Activated CD4-positive, alpha-beta T cell treated with anti-CD3 and anti-CD28 coated beads, Interleukin-2, amount 10 ng/mL, durations not matched to agents 24 days and 14 days (primary cell): ENCODE measurements at regions of chr3 and their contacts with region 1.

Region 1: GRCh38 chr3:44477312-44478030 is at the start of gene ZNF445:
- DNase-seq: peak; percentile 94
- H3K4me3 Mint-ChIP-seq: peak within 1 kb of the TSS; percentile 94
- H3K27ac Mint-ChIP-seq: peak within 1 kb of the TSS; percentile 90
- H3K4me1 Mint-ChIP-seq: peaks cover 21% of the 10 kb centered on the region
- H3K27me3 Mint-ChIP-seq: no peaks in the 10 kb centered on the region
- total RNA-seq, gene ZNF445: 17.7 and 19.8 TPM in 2 replicates

Region 2: GRCh38 chr3:44323341-44323955 is 154.0 kb before region 1 on chr3:
- intact Hi-C with region 1: loop called (anchors 5 kb)
- DNase-seq: peak; percentile 85
- H3K4me3 Mint-ChIP-seq: no peak overlapping the region
- H3K27ac Mint-ChIP-seq: no peak overlapping the region
- H3K4me1 Mint-ChIP-seq: no peaks in the 10 kb centered on the region
- H3K27me3 Mint-ChIP-seq: peaks cover 31% of the 10 kb centered on the region

Region 3: GRCh38 chr3:44439499-44440295 is 37.8 kb before region 1 on chr3:
- intact Hi-C with region 1: loop called (anchors 1 kb)
- DNase-seq: peak; percentile 90
- H3K4me3 Mint-ChIP-seq: peak overlapping the region; percentile 66
- H3K27ac Mint-ChIP-seq: peak overlapping the region; percentile 85
- H3K4me1 Mint-ChIP-seq: peaks cover 38% of the 10 kb centered on the region
- H3K27me3 Mint-ChIP-seq: no peaks in the 10 kb centered on the region

Region 4: GRCh38 chr3:44454258-44454657 is 23.2 kb before region 1 on chr3:
- intact Hi-C with region 1: no loop called
- DNase-seq: no peak
- H3K4me3 Mint-ChIP-seq: no peak overlapping the region
- H3K27ac Mint-ChIP-seq: no peak overlapping the region
- H3K4me1 Mint-ChIP-seq: no peaks in the 10 kb centered on the region
- H3K27me3 Mint-ChIP-seq: no peaks in the 10 kb centered on the region

Region 5: GRCh38 chr3:44495636-44496415 is 18.4 kb after region 1 on chr3:
- intact Hi-C with region 1: no loop called
- DNase-seq: no peak
- H3K4me3 Mint-ChIP-seq: no peak overlapping the region
- H3K27ac Mint-ChIP-seq: no peak overlapping the region
- H3K4me1 Mint-ChIP-seq: no peaks in the 10 kb centered on the region
- H3K27me3 Mint-ChIP-seq: no peaks in the 10 kb centered on the region

Region 6: GRCh38 chr3:44976002-44976815 is 498.7 kb after region 1 on chr3 and contains the starts of genes EXOSC7 and ZDHHC3:
- intact Hi-C with region 1: loop called (anchors 2 kb)
- DNase-seq: peak; percentile 95
- H3K4me3 Mint-ChIP-seq: peak within 1 kb of the TSS; percentile 98
- H3K27ac Mint-ChIP-seq: peak within 1 kb of the TSS; percentile 98
- H3K4me1 Mint-ChIP-seq: peaks cover 50% of the 10 kb centered on the region
- H3K27me3 Mint-ChIP-seq: no peaks in the 10 kb centered on the region
- total RNA-seq, gene EXOSC7: 95.5 and 97.9 TPM in 2 replicates
- total RNA-seq, gene ZDHHC3: 42.0 and 46.2 TPM in 2 replicates